ENCODE measurements at regions of chr13 and their contacts with region 1.

Region 1: DNA sequence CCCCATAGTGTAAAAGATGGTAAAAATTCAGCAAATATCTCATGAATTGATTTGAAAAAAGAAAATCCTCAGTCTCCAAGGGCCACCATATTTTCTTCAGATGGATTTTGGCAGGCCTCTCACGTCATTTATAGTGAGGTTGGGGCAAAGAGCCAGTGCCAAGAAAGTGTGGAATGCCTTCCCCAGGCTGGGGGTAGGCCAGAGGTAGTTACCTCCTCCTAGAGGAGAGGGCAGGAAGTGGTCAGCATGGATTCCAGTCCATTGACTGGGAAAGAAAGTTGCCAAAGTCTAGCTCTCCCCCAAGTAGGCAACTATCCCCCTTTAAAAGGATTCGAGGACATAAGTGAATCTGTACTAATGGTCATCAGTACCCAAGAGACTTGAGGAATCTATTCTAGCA is 68.4 kb upstream of the KCTD4 start:
- DNase-seq: peak; percentile 22
- H3K4me3 ChIP-seq: no peak overlapping the region
- CTCF ChIP-seq: peak; percentile 20

Region 2: DNA sequence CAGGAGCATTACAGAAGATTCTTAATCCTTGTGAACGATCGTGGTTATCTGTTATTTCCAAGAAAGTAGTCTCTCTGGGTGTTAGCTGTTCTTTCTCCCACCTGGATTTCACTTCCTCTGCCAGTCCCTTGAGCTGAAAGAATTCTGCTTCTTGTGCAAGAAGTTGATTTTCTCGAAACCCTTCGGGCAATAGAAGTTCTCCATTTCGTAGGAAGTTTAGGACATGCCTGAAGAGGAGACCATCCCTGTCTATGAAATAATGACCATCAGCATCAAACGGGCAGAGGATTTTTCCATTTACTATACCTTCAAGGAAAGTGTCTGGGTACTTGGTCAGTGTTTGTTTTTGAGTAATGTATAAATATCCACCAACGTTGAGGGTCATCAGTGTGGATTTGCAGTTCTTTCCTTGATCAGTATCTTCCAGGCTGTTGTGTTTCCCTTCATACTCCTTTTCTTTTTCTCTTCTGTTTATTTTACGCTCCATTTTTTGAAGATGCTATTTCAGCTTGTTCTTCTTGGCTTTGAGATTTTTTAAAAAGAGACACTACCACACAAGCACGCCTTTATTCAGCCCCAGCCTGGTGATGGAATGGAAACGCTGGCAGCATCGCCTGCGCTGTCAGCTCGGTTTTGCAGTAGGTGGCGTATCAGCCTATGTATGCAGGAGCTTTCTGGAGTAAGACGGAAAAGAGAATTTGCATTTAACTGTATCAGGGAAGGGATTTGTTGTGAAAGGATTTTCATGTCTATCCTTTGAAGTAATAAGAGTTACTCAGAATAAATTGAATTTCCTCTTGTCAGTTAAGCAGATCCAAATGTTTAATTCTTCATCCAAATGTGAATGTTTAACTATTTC is 74.9 kb before region 1 on chr13:
- in situ Hi-C with region 1: no loop called
- DNase-seq: no peak
- H3K4me3 ChIP-seq: no peak overlapping the region
- CTCF ChIP-seq: peak; percentile 63

Region 3: GRCh38 chr13:45320876-45321629 is 51.8 kb after region 1 on chr13:
- in situ Hi-C with region 1: loop called (anchors 5 kb)
- DNase-seq: no peak
- H3K4me3 ChIP-seq: no peak overlapping the region
- CTCF ChIP-seq: no peak